ENCODE measurements at regions of chr14 and their contacts with region 1.

Region 1: DNA sequence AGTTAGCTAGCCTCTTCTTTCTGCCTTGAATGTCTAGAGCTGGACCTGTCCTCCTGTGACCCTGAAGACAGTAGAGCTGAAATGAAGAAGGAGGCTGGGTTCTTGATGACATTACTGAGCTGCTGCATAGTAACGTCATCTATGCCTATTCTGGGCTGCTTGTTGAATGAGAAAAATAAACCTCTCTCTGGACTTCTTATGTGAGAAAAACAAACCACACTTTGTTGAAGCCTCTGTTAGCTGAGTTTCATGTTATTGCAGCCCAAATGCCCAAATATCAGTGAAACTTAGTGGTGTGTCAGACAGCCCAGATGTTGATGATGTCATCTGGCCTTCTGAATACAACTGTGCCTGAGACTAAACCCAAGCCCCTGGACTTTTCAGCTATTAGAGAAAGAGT is 67.0 kb upstream of the MAX start:
- DNase-seq: no peak
- ATAC-seq: peak; percentile 61 to 74
- H3K4me3 ChIP-seq: no peak overlapping the region
- H3K27ac ChIP-seq: no peak overlapping the region
- H3K4me1 ChIP-seq: peaks cover 2% of the 10 kb centered on the region
- H3K27me3 ChIP-seq: no peaks in the 10 kb centered on the region

Region 2: DNA sequence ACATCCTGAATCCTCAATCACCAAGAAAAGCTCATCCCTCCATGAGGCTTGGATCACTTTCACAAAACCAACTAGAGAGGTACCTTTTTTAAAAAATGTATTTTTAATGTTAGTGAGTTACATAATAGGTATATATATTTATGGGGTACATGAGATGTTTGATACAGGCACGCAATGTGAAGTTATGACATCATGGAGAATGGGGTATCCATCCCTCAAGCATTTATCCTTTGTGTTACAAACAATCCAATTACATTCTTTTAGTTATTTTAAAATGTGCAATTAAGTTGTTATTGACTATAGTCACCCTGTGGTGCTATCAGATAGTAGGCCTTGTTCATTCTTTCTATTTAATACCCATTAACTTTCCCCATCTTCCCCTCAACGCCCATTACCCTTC is 27.6 kb after region 1 on chr14:
- intact Hi-C with region 1: loop called in 1 of 4 experiments (anchors 2 kb)
- DNase-seq: no peak
- ATAC-seq: no peak
- H3K4me3 ChIP-seq: no peak overlapping the region
- H3K27ac ChIP-seq: no peak overlapping the region
- H3K4me1 ChIP-seq: no peaks in the 10 kb centered on the region
- H3K27me3 ChIP-seq: no peaks in the 10 kb centered on the region

Region 3: GRCh38 chr14:65824285-65824977 is 655.1 kb after region 1 on chr14:
- intact Hi-C with region 1: loop called in 3 of 4 experiments (anchors 5 kb)
- DNase-seq: peak in 1 of 3 donors; percentile 20
- ATAC-seq: peak; percentile 65 to 78
- H3K4me3 ChIP-seq: no peak overlapping the region
- H3K27ac ChIP-seq: no peak overlapping the region
- H3K4me1 ChIP-seq: no peaks in the 10 kb centered on the region
- H3K27me3 ChIP-seq: no peaks in the 10 kb centered on the region

Measured in right cardiac atrium (tissue), 5 donors.